ENCODE measurements at regions of chr3 and their contacts with region 1.

Region 1: DNA sequence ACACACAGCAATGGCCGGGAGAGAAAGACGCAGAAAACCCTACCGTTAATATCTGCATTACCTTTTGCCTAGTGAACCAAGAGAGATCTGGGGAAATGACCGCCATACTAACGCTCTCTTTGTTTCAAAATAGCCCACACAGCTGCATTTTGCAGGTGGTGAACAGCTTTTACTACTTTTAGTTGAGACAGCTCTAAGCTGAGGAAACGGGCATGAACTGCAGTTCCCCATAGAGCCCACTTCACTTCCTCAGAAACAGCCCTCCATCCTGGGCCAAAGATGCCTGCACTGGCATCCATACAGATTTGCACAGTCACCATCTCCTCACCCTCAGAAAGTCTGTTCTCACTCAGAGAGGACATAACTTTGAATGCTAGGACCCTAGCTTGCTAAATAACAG is 45.0 kb downstream of the ZNF860 start:
- DNase-seq: no peak
- ATAC-seq: no peak
- H3K4me3 ChIP-seq: no peak overlapping the region
- H3K27ac ChIP-seq: no peak overlapping the region
- H3K4me1 ChIP-seq: no peaks in the 10 kb centered on the region
- H3K27me3 ChIP-seq: no peaks in the 10 kb centered on the region
- CTCF ChIP-seq: no peak

Region 2: GRCh38 chr3:31968927-31969418 is 57.6 kb before region 1 on chr3:
- intact Hi-C with region 1: no loop called
- DNase-seq: no peak
- ATAC-seq: peak; percentile 52
- H3K4me3 ChIP-seq: no peak overlapping the region
- H3K27ac ChIP-seq: peak overlapping the region; percentile 15 to 73
- H3K4me1 ChIP-seq: peaks cover 5 to 12% of the 10 kb centered on the region in 2 donors
- H3K27me3 ChIP-seq: no peaks in the 10 kb centered on the region
- CTCF ChIP-seq: no peak

Region 3: GRCh38 chr3:32138545-32139104 is 112.0 kb after region 1 on chr3:
- intact Hi-C with region 1: loop called (anchors 5 to 10 kb)
- DNase-seq: no peak
- ATAC-seq: no peak
- H3K4me3 ChIP-seq: no peak overlapping the region
- H3K27ac ChIP-seq: no peak overlapping the region
- H3K4me1 ChIP-seq: peaks cover 0 to 8% of the 10 kb centered on the region in 2 donors
- H3K27me3 ChIP-seq: no peaks in the 10 kb centered on the region
- CTCF ChIP-seq: no peak